HepG2 (cell line): ENCODE measurements at regions of chr1 and their contacts with region 1.

Region 1: DNA sequence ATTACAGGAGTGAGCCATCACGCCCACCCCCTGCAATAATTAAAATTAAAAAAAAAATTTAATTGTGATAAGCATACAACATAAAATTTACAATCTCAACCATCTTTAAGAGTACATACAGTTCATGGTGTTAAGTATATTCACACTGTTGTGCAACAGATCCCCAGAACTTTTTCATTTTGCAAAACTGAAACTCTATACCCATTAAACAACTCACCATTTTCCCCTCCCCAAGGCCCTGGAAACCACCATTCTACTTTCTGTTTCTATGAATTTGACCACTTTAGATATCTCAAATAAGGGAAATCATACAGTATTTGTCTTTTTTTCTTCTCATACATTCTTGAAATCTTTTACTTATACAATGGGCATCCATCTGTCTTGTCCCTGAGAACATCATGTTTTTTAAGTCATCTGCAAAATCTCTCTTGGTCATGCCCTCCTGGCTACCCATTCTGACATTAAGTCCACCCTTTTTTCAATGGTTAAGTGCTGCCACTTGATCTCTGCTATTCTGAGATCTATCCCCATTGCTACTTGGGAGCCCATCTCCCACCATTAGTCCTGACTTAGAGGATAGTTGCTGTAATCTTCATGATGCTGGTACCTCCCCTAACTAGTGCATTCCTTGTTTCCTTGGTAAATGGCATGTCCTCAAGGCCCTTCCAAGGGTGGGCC is 39.4 kb upstream of the ZFYVE9 start:
- DNase-seq: no peak
- ATAC-seq: no peak
- H3K4me3 ChIP-seq: no peak overlapping the region
- H3K27ac ChIP-seq: no peak overlapping the region
- H3K4me1 ChIP-seq: peaks cover 19% of the 10 kb centered on the region
- H3K27me3 ChIP-seq: no peaks in the 10 kb centered on the region
- CTCF ChIP-seq: no peak
- EP300 ChIP-seq: no peak
- POLR2A ChIP-seq: no peak
- RAD21 ChIP-seq: no peak

Region 2: DNA sequence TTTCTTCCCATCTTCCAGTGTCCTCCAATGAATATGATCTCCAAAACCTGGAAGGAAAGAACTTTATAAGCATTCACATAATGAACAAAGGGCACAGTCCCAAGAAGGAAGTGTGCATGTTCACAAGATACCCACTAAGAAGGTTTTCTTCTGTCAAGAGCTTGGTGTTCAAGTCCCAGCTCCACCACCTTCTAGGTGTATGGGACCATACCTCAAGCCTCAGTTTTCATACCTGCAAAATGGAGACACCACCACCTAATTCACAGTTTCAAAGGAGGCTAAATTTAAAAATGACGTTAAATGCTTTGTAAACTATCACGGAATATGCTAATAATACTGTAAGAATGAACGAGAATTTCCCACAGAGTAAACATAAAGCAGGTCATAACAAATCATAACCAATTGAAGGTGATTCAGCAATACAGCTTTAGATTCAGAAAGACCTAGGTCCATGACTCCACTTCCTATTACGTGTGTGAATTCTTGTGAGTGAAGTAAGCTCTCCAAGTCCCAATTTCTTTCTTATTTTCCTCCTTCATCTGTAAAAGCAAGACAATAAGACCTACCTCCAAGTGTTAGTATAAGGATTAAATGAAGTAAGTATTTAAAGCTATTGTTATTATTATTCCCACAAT is 60.8 kb before region 1 on chr1:
- CTCF ChIA-PET with region 1: no interaction called
- POLR2A ChIA-PET with region 1: no interaction called
- in situ Hi-C with region 1: no loop called
- intact Hi-C with region 1: loop called (anchors 2 kb)
- DNase-seq: no peak
- ATAC-seq: no peak
- H3K4me3 ChIP-seq: no peak overlapping the region
- H3K27ac ChIP-seq: no peak overlapping the region
- H3K4me1 ChIP-seq: peaks cover 27% of the 10 kb centered on the region
- H3K27me3 ChIP-seq: no peaks in the 10 kb centered on the region
- CTCF ChIP-seq: no peak
- EP300 ChIP-seq: no peak
- POLR2A ChIP-seq: no peak
- RAD21 ChIP-seq: no peak

Region 3: GRCh38 chr1:52080014-52080415 is 22.5 kb before region 1 on chr1:
- CTCF ChIA-PET with region 1: no interaction called
- POLR2A ChIA-PET with region 1: interaction called, 13 read pairs
- in situ Hi-C with region 1: no loop called
- intact Hi-C with region 1: loop called (anchors 1 kb)
- DNase-seq: peak; percentile 97
- ATAC-seq: peak; percentile 81
- H3K4me3 ChIP-seq: no peak overlapping the region
- H3K27ac ChIP-seq: peak overlapping the region; percentile 80
- H3K4me1 ChIP-seq: peaks cover 55% of the 10 kb centered on the region
- H3K27me3 ChIP-seq: no peaks in the 10 kb centered on the region
- CTCF ChIP-seq: no peak
- EP300 ChIP-seq: peak in 1 of 2 experiments; percentile 90; a peak in 2 of 4 replicates
- POLR2A ChIP-seq: no peak
- RAD21 ChIP-seq: no peak